A549 (cell line): ENCODE measurements at regions of chr14 and their contacts with region 1.

Region 1: GRCh38 chr14:91041450-91041849 is 19.0 kb downstream of the RPS6KA5 start:
- DNase-seq: no peak
- ATAC-seq: no peak
- H3K4me3 ChIP-seq: no peak overlapping the region
- H3K27ac ChIP-seq: no peak overlapping the region
- H3K4me1 ChIP-seq: no peaks in the 10 kb centered on the region
- CTCF ChIP-seq: no peak
- EP300 ChIP-seq: no peak
- POLR2A ChIP-seq: no peak
- RAD21 ChIP-seq: no peak

Region 2: DNA sequence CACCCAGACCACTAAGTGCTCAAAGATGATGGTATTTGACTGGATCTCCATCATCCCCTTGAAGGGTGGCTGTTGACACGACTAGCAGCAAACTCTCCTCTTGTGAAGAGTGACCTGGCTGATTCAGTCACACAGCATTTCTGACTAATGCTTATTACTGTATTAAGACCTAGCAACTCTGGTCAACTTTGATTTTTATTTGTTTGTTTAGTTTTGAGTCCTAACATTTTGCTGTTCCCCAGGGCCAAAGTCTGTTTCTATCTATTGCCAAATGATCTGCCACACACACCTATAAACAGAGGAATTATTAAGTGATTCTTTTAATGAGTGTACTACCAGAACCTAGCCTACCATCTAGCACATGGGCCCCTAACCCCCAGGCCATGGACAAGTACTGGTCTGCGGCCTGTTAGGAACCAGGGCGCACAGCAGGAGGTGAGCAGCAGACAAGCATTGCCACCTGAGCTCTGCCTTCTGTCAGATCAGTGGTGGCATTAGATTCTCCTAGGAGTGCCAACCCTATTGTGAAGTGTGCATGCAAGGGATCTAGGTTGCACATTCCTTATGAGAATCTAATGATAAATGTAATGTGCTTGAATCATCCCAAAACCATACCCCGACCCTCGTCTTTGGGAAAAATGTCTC is 101.0 kb before region 1 on chr14:
- CTCF ChIA-PET with region 1: no interaction called
- POLR2A ChIA-PET with region 1: no interaction called
- DNase-seq: no peak
- ATAC-seq: no peak
- H3K4me3 ChIP-seq: no peak overlapping the region
- H3K27ac ChIP-seq: no peak overlapping the region
- H3K4me1 ChIP-seq: no peaks in the 10 kb centered on the region
- CTCF ChIP-seq: no peak
- EP300 ChIP-seq: no peak
- POLR2A ChIP-seq: no peak
- RAD21 ChIP-seq: no peak

Region 3: GRCh38 chr14:91060351-91061055 is 19.1 kb after region 1 on chr14 and contains the start of gene RPS6KA5:
- CTCF ChIA-PET with region 1: interaction called, 10 read pairs
- POLR2A ChIA-PET with region 1: no interaction called
- DNase-seq: peak; percentile 97 to 100
- ATAC-seq: peak; percentile 93 to 96
- H3K4me3 ChIP-seq: peak within 1 kb of the TSS; percentile 67
- H3K27ac ChIP-seq: peak within 1 kb of the TSS; percentile 73 to 91
- H3K4me1 ChIP-seq: peaks cover 22% of the 10 kb centered on the region
- CTCF ChIP-seq: no peak; the same call in 2 of the 3 replicates
- EP300 ChIP-seq: no peak
- POLR2A ChIP-seq: peak; percentile 25; the same call in 1 of the 2 replicates
- RAD21 ChIP-seq: 0 out of 5 replicates have a peak, but pooled peaks of 1 of the 2 experiments have one; percentile 28
- polyA plus RNA-seq, gene RPS6KA5: 3.6 and 4.1 TPM in 2 replicates